ENCODE measurements at regions of chr16 and their contacts with region 1.

Region 1: GRCh38 chr16:50354629-50355456 is 13.9 kb downstream of the BRD7 start:
- DNase-seq: no peak
- ATAC-seq: no peak
- H3K4me3 ChIP-seq: no peak overlapping the region
- H3K27ac ChIP-seq: peak overlapping the region in 2 of 12 donors; percentile 7 to 16
- H3K4me1 ChIP-seq: peaks cover 0 to 6% (median 0%) of the 10 kb centered on the region in 12 donors
- H3K27me3 ChIP-seq: no peaks in the 10 kb centered on the region
- CTCF ChIP-seq: peak; percentile 38 to 73 (median 61)
- POLR2A ChIP-seq: no peak

Region 2: GRCh38 chr16:50038756-50039529 is 315.9 kb before region 1 on chr16:
- intact Hi-C with region 1: loop called in 1 of 10 experiments (anchors 10 kb)
- DNase-seq: peak in 4 of 5 donors; percentile 54 to 70 (median 62)
- ATAC-seq: peak; percentile 61 to 94 (median 80)
- H3K4me3 ChIP-seq: no peak overlapping the region
- H3K27ac ChIP-seq: peak overlapping the region in 3 of 12 donors; percentile 19 to 87 (median 45)
- H3K4me1 ChIP-seq: peaks cover 0 to 41% (median 0%) of the 10 kb centered on the region in 12 donors
- H3K27me3 ChIP-seq: peaks cover 0 to 6% (median 0%) of the 10 kb centered on the region in 9 donors
- CTCF ChIP-seq: no peak
- POLR2A ChIP-seq: no peak

Region 3: DNA sequence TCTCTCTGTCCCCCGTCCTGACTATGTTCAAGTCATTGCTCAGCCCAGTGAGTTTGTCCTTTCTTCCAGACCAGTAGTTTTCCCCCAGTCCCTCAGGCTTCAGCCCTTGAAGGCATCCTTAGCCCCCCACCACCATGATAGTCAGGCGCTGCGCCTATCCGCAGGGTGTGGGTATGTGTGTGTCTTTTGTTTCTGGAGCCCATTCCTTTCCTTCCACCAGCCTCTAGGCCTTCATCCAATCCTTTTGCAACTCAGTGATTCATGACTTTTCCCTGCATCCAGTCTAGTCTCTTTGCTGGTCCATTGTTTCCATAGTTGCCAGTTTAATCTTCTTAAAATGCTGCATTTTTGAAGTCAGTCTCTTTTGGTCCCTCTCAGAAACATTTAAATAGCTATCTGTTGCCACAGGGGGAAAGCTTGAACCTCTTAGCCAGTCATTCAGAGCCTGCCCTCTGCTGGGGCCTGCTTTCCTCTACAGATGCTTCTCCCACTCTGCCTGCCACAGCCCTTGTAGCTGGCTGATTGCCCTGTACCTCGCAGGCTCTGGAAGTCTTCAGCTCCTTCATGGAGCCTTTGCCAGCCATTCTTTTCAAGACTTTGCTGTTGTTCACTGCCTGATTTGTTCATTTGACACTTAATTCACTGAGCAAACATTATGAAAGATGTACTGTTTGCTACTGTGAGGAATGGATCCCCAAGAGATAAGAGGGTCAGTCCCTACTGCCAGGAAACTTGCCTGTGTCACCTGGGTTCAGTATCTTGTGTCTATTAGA is 144.4 kb before region 1 on chr16:
- intact Hi-C with region 1: loop called in 8 of 10 experiments (anchors 5 to 10 kb)
- DNase-seq: peak; percentile 81 to 89 (median 82)
- ATAC-seq: peak; percentile 92 to 95 (median 94)
- H3K4me3 ChIP-seq: no peak overlapping the region
- H3K27ac ChIP-seq: peak overlapping the region in 3 of 12 donors; percentile 17 to 48 (median 40)
- H3K4me1 ChIP-seq: peaks cover 2 to 54% (median 37%) of the 10 kb centered on the region in 12 donors
- H3K27me3 ChIP-seq: no peaks in the 10 kb centered on the region
- CTCF ChIP-seq: peak; percentile 52 to 88 (median 71)
- POLR2A ChIP-seq: no peak

Region 4: GRCh38 chr16:50245417-50246298 is 109.2 kb before region 1 on chr16:
- intact Hi-C with region 1: loop called in 3 of 10 experiments (anchors 10 kb)
- DNase-seq: peak in 4 of 5 donors; percentile 31 to 61 (median 54)
- ATAC-seq: peak in 3 of 4 donors; percentile 66 to 85 (median 79)
- H3K4me3 ChIP-seq: peak overlapping the region in 11 of 12 donors; percentile 33 to 78 (median 59)
- H3K27ac ChIP-seq: peak overlapping the region in 2 of 12 donors; percentile 12 to 13
- H3K4me1 ChIP-seq: peaks cover 0 to 21% (median 7%) of the 10 kb centered on the region in 12 donors
- H3K27me3 ChIP-seq: peaks cover 0 to 21% (median 0%) of the 10 kb centered on the region in 9 donors
- CTCF ChIP-seq: peak in 8 of 12 donors; percentile 8 to 50 (median 36)
- POLR2A ChIP-seq: no peak